Lower leg skin (tissue), 4 donors: ENCODE measurements at regions of chr2 and their contacts with region 1.

Region 1: GRCh38 chr2:231674587-231675338 is 33.6 kb upstream of the PTMA start:
- DNase-seq: peak; percentile 58 to 93
- H3K4me3 ChIP-seq: no peak overlapping the region
- CTCF ChIP-seq: peak in 1 of 3 donors; percentile 15
- POLR2A ChIP-seq: no peak

Region 2: DNA sequence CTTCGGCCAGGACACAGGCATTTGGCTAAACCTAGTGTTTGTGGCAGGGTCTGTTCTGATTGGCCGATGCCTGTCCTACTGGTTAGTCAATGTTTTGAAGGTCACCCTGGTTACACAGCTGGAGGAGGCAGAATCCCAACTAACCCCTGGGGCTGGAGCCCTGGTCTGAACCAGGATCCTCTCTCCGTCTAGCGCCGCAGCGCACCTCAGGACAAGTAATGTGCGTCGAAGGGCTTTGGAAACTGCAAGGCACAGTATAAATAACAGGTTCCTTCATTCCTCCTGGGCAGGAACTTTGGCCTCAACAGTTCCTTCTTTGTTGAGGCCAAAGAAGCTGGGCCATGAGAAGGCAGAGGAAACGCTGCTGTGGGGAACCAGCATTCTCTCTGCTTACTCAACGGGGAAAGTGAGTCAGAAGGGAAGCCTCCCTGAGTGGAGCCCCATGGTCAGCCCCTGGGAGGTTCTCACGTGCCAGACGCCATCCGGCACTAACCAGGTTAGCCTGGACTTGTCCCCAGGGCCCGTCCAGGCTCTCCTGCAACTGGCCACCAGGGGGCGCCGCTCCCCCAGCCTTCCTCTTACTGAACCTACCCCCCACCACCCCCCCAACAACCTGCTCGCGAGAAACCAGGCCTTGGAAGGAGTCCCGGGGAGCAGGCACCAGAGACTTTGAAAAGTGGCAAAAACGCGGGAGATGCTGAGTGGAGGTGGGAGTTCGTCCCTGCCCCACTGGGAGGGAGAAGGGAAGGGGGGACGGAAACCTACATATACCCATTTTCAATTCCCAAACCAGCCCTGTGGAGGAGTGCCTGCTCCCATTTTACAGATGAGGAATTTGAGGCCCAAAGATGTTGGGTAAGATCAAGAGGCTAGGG is 62.3 kb before region 1 on chr2:
- intact Hi-C with region 1: loop called (anchors 5 kb)
- DNase-seq: peak; percentile 95 to 99
- H3K4me3 ChIP-seq: no peak overlapping the region
- CTCF ChIP-seq: peak in 1 of 3 donors; percentile 94
- POLR2A ChIP-seq: no peak